Natural killer cell (primary cell): ENCODE measurements at regions of chr3 and their contacts with region 1.

Region 1: DNA sequence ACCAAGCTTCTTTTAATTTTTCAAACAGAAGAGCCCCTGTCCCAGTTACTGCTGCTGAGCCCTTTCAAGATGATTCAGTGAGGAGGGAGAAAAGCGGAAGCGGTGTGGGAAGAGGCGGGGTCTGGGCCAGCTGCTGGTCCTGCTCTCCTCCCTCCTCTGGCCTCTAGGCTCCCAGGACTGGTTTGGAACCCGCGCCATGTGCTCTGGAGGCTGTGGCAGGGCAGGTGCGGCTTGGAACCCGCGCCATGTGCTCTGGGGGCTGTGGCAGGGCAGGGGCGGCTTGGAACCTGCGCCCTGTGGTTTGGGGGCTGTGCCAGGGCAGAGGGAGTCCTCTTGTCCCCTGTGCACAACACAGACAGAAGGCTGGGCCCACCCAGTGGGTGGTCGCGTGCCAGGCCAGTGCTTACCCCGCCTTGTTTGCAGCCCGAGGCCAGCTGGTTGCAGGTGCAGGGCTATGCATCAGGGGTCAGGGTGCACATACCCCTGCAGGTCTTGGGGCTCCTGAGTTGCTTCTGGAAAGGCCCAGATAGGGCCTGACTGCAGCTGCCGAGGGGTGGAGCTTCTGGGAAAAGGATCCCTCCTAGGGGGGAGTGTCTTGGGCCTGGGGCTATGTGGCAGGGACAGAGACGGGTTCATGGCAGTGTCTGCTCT is 12.2 kb downstream of the ALG1L2 start:
- DNase-seq: peak in 1 of 2 donors; percentile 20
- ATAC-seq: no peak
- H3K4me3 ChIP-seq: peak overlapping the region; percentile 7
- H3K4me3 Mint-ChIP-seq: peak overlapping the region; percentile 58
- H3K27ac ChIP-seq: no peak overlapping the region
- H3K27ac Mint-ChIP-seq: peak overlapping the region in 1 of 2 donors; percentile 72
- H3K4me1 ChIP-seq: peaks cover 46% of the 10 kb centered on the region
- H3K4me1 Mint-ChIP-seq: peaks cover 0 to 45% of the 10 kb centered on the region in 2 donors
- H3K27me3 ChIP-seq: no peaks in the 10 kb centered on the region
- H3K27me3 Mint-ChIP-seq: no peaks in the 10 kb centered on the region
- CTCF ChIP-seq: no peak

Region 2: GRCh38 chr3:129942296-129942695 is 151.6 kb before region 1 on chr3:
- intact Hi-C with region 1: loop called (anchors 5 kb)
- DNase-seq: peak; percentile 26 to 54
- ATAC-seq: peak; percentile 64 to 83 (median 79)
- H3K4me3 ChIP-seq: no peak overlapping the region
- H3K4me3 Mint-ChIP-seq: no peak overlapping the region
- H3K27ac ChIP-seq: no peak overlapping the region
- H3K27ac Mint-ChIP-seq: no peak overlapping the region
- H3K4me1 ChIP-seq: no peaks in the 10 kb centered on the region
- H3K4me1 Mint-ChIP-seq: peaks cover 0 to 4% of the 10 kb centered on the region in 2 donors
- H3K27me3 ChIP-seq: no peaks in the 10 kb centered on the region
- H3K27me3 Mint-ChIP-seq: peaks cover 5 to 13% of the 10 kb centered on the region in 2 donors
- CTCF ChIP-seq: peak; percentile 33

Region 3: DNA sequence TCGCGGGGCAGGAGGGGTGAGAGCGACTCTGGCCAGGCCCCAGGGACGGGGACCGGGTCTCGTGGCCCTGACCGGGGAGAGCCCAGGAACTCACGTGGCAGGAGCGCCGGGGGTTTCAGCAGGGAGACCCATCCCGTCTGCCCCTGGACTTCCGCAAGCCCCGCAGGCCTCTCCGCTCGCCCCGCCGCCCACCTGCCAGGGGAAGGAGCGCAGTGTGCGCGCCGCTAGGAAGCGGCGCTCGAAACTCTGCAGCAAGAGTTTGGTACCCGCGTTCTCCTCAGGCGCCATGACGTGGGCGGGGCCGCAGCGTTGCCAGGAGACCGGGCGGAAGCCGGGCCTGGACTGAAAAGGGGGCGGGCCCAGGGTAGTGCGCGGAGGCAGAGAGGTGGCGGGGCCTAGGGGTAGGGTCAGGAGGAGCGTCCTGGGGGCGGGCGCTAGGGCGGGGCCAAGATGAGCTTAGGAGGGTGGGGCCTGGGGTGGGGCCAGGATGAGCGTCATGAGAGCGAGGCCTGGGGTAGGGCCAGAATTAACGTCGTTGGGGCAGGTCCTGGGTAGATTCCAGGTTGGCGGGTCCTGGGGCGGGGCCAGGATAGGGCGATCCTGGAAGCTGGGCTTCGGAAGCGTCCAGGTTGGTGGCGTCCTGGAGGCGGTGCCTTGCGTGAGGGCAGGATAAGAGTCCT is 17.5 kb after region 1 on chr3:
- intact Hi-C with region 1: no loop called
- DNase-seq: peak; percentile 96 to 99
- ATAC-seq: peak; percentile 100
- H3K4me3 ChIP-seq: peak overlapping the region; percentile 72
- H3K4me3 Mint-ChIP-seq: peak overlapping the region; percentile 94
- H3K27ac ChIP-seq: peak overlapping the region; percentile 85
- H3K27ac Mint-ChIP-seq: peak overlapping the region; percentile 93 to 98
- H3K4me1 ChIP-seq: peaks cover 10% of the 10 kb centered on the region
- H3K4me1 Mint-ChIP-seq: peaks cover 0 to 15% of the 10 kb centered on the region in 2 donors
- H3K27me3 ChIP-seq: no peaks in the 10 kb centered on the region
- H3K27me3 Mint-ChIP-seq: no peaks in the 10 kb centered on the region
- CTCF ChIP-seq: no peak